Activated naive CD4-positive, alpha-beta T cell treated with anti-CD3 and anti-CD28 coated beads, Interleukin-2, amount 10 ng/mL, durations not matched to agents 7 days and 5 days (primary cell): ENCODE measurements at regions of chr2 and their contacts with region 1.

Region 1: GRCh38 chr2:48946449-48947048 is 191.0 kb upstream of the LHCGR start:
- DNase-seq: peak; percentile 23
- H3K4me3 Mint-ChIP-seq: no peak overlapping the region
- H3K27ac Mint-ChIP-seq: no peak overlapping the region
- H3K4me1 Mint-ChIP-seq: no peaks in the 10 kb centered on the region
- H3K27me3 Mint-ChIP-seq: no peaks in the 10 kb centered on the region

Region 2: GRCh38 chr2:48927355-48927754 is 19.2 kb before region 1 on chr2:
- CTCF ChIA-PET with region 1: no interaction called
- DNase-seq: no peak
- H3K4me3 Mint-ChIP-seq: no peak overlapping the region
- H3K27ac Mint-ChIP-seq: no peak overlapping the region
- H3K4me1 Mint-ChIP-seq: no peaks in the 10 kb centered on the region
- H3K27me3 Mint-ChIP-seq: no peaks in the 10 kb centered on the region

Region 3: GRCh38 chr2:50143822-50144575 is 1197.5 kb after region 1 on chr2:
- CTCF ChIA-PET with region 1: interaction called, 11 read pairs
- DNase-seq: peak; percentile 20
- H3K4me3 Mint-ChIP-seq: peak overlapping the region; percentile 63
- H3K27ac Mint-ChIP-seq: no peak overlapping the region
- H3K4me1 Mint-ChIP-seq: peaks cover 3% of the 10 kb centered on the region
- H3K27me3 Mint-ChIP-seq: no peaks in the 10 kb centered on the region

Region 4: GRCh38 chr2:50401772-50402653 is 1455.5 kb after region 1 on chr2:
- CTCF ChIA-PET with region 1: interaction called, 12 read pairs
- DNase-seq: peak; percentile 54
- H3K4me3 Mint-ChIP-seq: no peak overlapping the region
- H3K27ac Mint-ChIP-seq: no peak overlapping the region
- H3K4me1 Mint-ChIP-seq: no peaks in the 10 kb centered on the region
- H3K27me3 Mint-ChIP-seq: no peaks in the 10 kb centered on the region